ENCODE measurements at regions of chr1 and their contacts with region 1.

Region 1: DNA sequence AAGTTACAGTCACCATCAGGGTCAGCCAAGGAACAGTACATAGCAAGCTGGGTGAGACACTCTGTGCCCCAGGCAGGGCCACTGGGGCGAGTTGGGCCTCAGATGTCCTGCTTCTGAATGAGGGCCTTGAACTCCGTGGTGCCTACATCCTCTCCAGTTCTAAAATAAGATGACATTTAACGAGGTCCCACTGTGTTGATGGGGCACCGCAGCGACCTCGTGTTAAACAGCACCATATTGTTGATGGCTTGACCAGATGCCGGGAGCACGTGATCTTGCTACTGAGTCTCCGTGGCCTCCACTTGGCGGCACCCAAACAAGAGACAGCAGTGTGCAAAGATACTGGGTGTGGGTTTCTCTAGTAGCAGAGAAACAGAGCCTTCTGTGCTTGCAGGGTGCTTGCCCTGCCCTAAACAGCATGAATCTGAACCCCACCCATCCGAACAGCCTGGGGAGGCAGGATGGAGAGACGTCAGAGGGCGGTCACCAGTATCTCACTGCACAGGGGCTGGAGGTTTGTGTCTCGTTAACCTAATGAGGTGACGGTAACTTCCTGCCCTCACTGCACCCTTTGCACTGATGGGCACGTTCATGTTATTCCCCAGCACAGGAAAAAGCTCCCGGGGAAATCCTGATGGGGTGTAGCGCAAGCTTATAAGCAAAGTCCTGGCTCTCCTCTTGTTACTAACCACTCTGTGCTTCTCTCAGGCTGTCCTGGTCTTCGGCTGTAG is 324.4 kb downstream of the AJAP1 start:
- DNase-seq: no peak
- ATAC-seq: peak; percentile 41 to 43
- H3K4me3 ChIP-seq: no peak overlapping the region
- H3K27ac ChIP-seq: no peak overlapping the region
- H3K4me1 ChIP-seq: no peaks in the 10 kb centered on the region
- H3K27me3 ChIP-seq: no peaks in the 10 kb centered on the region

Region 2: DNA sequence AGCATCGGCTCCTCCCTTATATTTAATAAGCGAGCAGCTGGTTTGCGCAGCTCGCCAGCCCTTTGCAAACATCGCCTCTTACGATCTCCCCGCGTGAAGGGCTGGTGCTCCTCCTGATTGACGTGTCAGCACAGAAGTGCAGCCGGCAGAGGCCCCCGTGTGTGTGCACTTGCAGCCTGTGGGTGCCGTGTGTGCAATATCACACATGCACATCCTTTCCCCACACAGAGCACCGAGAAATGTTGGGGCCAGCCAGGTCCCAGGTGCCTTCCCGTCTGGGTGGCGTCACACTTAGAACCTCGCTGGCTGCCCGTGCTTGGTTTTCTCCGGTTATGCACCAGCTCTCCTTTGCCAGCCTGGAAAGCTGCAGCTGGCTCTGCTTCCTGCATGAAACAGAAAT is 451.0 kb before region 1 on chr1:
- intact Hi-C with region 1: loop called in 1 of 4 experiments (anchors 5 kb)
- DNase-seq: no peak
- ATAC-seq: no peak
- H3K4me3 ChIP-seq: no peak overlapping the region
- H3K27ac ChIP-seq: no peak overlapping the region
- H3K4me1 ChIP-seq: no peaks in the 10 kb centered on the region
- H3K27me3 ChIP-seq: no peaks in the 10 kb centered on the region